GM23248 (cell line): ENCODE measurements at regions of chr17 and their contacts with region 1.

Region 1: GRCh38 chr17:78736526-78737079 is 45.5 kb downstream of the CYTH1 start:
- DNase-seq: no peak
- H3K4me3 ChIP-seq: 0 out of 2 replicates have a peak overlapping the region, but pooled peaks have one; percentile 8
- H3K27ac ChIP-seq: peak overlapping the region; percentile 31
- H3K4me1 ChIP-seq: peaks cover 31% of the 10 kb centered on the region
- H3K27me3 ChIP-seq: no peaks in the 10 kb centered on the region

Region 2: GRCh38 chr17:78798695-78799559 is 62.3 kb after region 1 on chr17:
- in situ Hi-C with region 1: loop called (anchors 10 kb)
- DNase-seq: peak; percentile 58
- H3K4me3 ChIP-seq: no peak overlapping the region
- H3K27ac ChIP-seq: peak overlapping the region; percentile 6; the same call in 1 of the 2 replicates
- H3K4me1 ChIP-seq: 0 out of 2 replicates have a peak, but pooled peaks cover 12% of the 10 kb centered on the region
- H3K27me3 ChIP-seq: no peaks in the 10 kb centered on the region